Activated T-helper 2 cell treated with anti-CD3 and anti-CD28 coated beads, Interferon-gamma antibody, Interleukin-2, Interleukin-4, amounts not matched to agents 10 μg/mL and 5 μg/mL and 100 μg/mL, durations not matched to agents 14 hours and 24 hours and 36 hours (primary cell): ENCODE measurements at regions of chr1 and their contacts with region 1.

Region 1: GRCh38 chr1:6602669-6603237 is at the start of gene KLHL21:
- DNase-seq: peak; percentile 77
- H3K4me3 Mint-ChIP-seq: peak within 1 kb of the TSS; percentile 96
- H3K27ac Mint-ChIP-seq: peak within 1 kb of the TSS; percentile 97
- H3K4me1 Mint-ChIP-seq: peaks cover 21% of the 10 kb centered on the region
- H3K27me3 Mint-ChIP-seq: no peaks in the 10 kb centered on the region
- total RNA-seq, gene KLHL21: 21.3 and 22.6 TPM in 2 replicates

Region 2: DNA sequence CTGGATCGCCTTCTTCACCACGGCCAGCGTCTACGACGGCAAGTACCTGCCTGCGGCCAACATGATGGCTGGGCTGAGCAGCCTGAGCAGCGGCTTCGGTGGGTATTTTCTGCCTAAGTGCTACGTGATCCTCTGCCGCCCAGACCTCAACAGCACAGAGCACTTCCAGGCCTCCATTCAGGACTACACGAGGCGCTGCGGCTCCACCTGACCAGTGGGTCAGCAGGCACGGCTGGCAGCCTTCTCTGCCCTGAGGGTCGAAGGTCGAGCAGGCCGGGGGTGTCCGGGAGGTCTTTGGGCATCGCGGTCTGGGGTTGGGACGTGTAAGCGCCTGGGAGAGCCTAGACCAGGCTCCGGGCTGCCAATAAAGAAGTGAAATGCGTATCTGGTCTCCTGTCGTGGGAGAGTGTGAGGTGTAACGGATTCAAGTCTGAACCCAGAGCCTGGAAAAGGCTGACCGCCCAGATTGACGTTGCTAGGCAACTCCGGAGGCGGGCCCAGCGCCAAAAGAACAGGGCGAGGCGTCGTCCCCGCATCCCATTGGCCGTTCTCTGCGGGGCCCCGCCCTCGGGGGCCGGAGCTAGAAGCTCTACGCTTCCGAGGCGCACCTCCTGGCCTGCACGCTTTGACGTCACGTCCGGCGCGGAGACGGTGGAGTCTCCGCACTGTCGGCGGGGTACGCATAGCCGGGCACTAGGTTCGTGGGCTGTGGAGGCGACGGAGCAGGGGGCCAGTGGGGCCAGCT is 23.2 kb before region 1 on chr1 and contains the start of gene ZBTB48:
- intact Hi-C with region 1: loop called (anchors 1 kb)
- DNase-seq: peak; percentile 95
- H3K4me3 Mint-ChIP-seq: peak within 1 kb of the TSS; percentile 88
- H3K27ac Mint-ChIP-seq: peak within 1 kb of the TSS; percentile 92
- H3K4me1 Mint-ChIP-seq: peaks cover 31% of the 10 kb centered on the region
- H3K27me3 Mint-ChIP-seq: no peaks in the 10 kb centered on the region
- total RNA-seq, gene ZBTB48: 26.3 and 28.0 TPM in 2 replicates

Region 3: DNA sequence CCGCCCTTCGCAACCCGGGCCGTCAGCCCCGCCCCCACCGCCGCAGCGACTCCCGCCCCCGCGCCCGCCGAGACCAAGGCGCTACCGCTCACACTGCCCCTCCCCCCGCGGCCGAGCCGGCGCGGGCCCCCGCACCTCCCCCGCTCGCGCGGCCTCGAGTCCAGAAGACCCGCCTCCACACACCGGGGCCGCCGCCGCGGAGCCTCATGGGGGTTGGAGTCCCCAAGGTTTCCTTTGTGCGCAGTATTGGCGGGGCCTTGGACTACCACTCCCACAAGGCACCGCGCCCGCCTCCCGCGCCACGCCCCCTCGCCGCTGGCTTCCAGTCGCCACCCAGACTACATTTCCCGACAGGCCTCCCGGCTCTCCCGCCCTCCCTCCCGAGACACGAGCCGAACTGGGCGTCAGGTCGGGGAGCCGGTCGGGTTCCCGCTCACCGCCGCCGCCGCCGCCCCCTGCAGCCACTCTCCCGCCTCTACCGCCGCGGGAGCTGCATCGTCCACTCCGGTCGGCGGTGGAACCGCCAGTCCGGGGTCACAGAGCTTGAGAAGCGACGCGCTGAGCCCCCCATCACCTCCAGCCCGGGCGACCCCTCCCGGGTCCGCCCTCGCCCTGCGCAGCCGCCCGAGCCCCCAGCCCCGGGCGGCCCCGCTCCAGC is 10.7 kb after region 1 on chr1 and contains the start of gene PHF13:
- intact Hi-C with region 1: loop called (anchors 1 kb)
- DNase-seq: peak; percentile 99
- H3K4me3 Mint-ChIP-seq: peak within 1 kb of the TSS; percentile 86
- H3K27ac Mint-ChIP-seq: peak within 1 kb of the TSS; percentile 67
- H3K4me1 Mint-ChIP-seq: peaks cover 14% of the 10 kb centered on the region
- H3K27me3 Mint-ChIP-seq: peaks cover 5% of the 10 kb centered on the region
- total RNA-seq, gene PHF13: 19.7 and 20.4 TPM in 2 replicates

Region 4: GRCh38 chr1:6624710-6625583 is 22.2 kb after region 1 on chr1 and contains the start of gene THAP3:
- intact Hi-C with region 1: loop called (anchors 1 kb)
- DNase-seq: peak; percentile 79
- H3K4me3 Mint-ChIP-seq: peak within 1 kb of the TSS; percentile 86
- H3K27ac Mint-ChIP-seq: peak within 1 kb of the TSS; percentile 78
- H3K4me1 Mint-ChIP-seq: peaks cover 15% of the 10 kb centered on the region
- H3K27me3 Mint-ChIP-seq: no peaks in the 10 kb centered on the region
- total RNA-seq, gene THAP3: 23.2 and 24.1 TPM in 2 replicates